Activated CD4-positive, alpha-beta memory T cell treated with anti-CD3 and anti-CD28 coated beads for 36 hours (primary cell): ENCODE measurements at regions of chr5 and their contacts with region 1.

Region 1: DNA sequence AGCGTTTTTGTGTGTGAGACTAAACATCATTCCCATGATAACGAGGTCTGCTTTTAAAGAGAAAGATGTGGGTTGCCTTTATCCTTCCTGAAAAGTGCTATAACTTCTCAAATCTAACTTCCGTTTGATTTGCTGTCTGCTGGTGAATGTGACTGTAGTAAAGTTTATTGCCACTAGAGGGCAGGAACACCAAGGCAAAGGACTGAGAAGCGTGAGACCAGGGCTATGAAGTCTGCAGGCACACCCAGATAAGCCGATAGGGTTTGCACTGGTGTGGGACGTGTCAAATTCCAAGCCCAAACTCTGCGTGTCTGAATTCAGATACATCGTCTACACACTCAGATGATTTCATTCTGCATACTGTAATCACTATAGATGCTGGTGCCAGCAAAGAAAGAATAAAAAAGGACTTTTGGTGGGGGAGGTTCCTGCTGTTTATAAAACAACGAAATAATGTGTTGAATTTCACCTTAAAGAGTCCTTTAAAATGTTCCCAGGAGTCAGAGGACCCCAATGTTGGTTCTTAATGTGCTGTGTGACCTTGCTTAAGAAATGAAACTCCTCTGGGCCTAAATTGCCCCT is 87.2 kb downstream of the PTTG1 start:
- DNase-seq: peak; percentile 76
- H3K4me3 Mint-ChIP-seq: peak overlapping the region; percentile 34
- H3K27ac Mint-ChIP-seq: peak overlapping the region; percentile 75
- H3K4me1 Mint-ChIP-seq: peaks cover 40% of the 10 kb centered on the region
- H3K27me3 Mint-ChIP-seq: no peaks in the 10 kb centered on the region

Region 2: DNA sequence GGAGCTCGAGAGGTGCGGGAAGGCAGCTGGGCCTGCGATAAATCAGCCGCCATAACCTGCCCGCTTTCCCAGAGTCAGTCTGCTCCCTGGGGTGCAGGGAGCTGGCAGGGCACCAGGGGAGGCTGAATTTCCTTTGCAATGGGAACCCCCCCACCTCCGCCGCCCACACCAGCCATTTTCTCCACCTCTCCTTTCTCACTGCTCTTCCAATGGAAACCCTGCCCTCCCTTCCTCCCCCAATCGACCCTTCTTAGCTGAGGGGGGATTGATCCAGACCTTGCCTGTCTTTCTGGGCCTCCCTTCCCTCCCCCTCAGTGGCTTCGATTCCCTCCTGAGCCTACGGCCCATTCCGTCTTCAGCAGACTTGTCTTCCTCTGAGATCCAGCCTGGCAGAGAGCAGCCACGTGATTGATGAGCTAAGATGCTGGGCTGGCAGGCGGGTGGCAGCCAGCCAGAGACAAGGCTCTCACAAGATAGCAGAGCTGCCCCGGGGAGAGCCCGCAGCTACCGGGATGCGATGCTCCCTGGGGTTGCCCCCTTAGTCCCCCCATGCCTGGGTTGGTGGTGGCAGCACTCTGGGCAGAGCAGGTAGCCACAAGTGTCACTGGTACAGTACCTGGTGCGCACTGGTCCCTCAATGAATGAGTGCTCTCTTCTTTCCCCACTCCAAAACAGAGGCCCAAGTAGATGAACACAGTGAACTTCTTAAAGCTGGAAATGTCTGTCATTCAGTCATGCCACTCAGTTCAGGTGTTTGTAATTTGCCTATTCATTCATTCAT is 333.2 kb before region 1 on chr5:
- CTCF ChIA-PET with region 1: no interaction called
- POLR2A ChIA-PET with region 1: no interaction called
- intact Hi-C with region 1: no loop called
- DNase-seq: no peak
- H3K4me3 Mint-ChIP-seq: no peak overlapping the region
- H3K27ac Mint-ChIP-seq: no peak overlapping the region
- H3K4me1 Mint-ChIP-seq: no peaks in the 10 kb centered on the region
- H3K27me3 Mint-ChIP-seq: no peaks in the 10 kb centered on the region

Region 3: DNA sequence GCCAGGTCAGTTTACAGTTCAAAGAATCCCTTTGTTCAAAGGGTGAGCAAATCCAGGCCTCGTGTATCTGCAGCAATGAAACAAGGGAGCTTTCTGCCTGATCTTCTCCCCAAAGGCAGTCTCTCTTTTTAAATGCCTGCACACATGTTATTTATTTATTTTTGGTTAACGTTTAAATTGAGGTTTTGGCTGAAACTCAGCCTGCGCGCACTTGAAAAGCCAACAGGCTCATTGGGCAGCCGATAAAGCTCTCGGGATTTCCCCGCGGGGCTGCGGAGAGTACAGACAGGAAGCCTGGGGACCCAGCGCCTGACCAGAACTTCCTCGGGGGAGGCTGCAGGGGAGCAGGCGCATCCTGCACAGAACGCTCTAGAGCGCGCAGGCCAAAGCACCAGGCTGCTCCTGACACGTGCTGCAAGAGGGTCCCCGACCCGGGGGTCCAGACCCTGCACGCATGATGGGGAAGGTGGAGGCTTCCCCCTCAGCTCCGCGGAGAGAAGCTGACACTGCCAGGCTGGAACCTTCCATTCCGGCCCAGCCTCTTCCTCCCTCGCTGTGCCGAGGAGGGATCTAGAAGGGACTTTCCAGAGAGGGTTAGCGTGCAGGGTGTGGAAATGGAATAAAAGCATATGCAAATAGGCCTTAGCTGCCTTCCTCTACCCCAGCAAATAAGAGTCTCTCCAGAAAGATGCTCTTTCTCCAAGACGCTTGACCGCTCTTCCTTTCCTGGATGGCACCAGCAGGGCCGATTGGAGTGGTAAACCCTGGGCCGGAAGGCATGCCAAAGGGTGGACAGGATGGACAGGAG is 41.1 kb before region 1 on chr5:
- CTCF ChIA-PET with region 1: interaction called, 34 read pairs
- POLR2A ChIA-PET with region 1: interaction called, 24 read pairs
- intact Hi-C with region 1: loop called (anchors 1 kb)
- DNase-seq: peak; percentile 91
- H3K4me3 Mint-ChIP-seq: peak overlapping the region; percentile 98
- H3K27ac Mint-ChIP-seq: peak overlapping the region; percentile 98
- H3K4me1 Mint-ChIP-seq: peaks cover 65% of the 10 kb centered on the region
- H3K27me3 Mint-ChIP-seq: no peaks in the 10 kb centered on the region

Region 4: DNA sequence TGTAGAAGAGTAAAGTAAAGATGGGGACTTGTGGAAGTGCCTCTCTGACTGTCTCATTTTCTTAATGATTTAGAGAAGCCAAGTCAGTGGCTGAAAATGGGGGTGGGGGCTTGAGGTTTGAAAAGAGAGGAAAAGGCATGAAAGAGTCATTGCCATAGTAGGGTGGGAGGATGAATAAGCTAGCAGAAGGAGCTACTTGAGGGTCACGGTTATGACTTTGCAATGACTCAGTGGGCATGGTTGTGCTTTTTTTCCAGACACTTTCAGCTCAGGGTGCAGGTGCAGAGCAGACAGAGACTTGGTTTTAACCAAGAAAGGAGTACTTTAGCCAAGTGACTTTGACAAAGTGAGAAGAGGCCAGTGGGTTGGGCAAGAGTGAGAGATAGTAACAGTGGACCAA is 30.6 kb after region 1 on chr5:
- CTCF ChIA-PET with region 1: interaction called, 14 read pairs
- POLR2A ChIA-PET with region 1: interaction called, 6 read pairs
- intact Hi-C with region 1: loop called (anchors 1 kb)
- DNase-seq: peak; percentile 84
- H3K4me3 Mint-ChIP-seq: no peak overlapping the region
- H3K27ac Mint-ChIP-seq: no peak overlapping the region
- H3K4me1 Mint-ChIP-seq: peaks cover 24% of the 10 kb centered on the region
- H3K27me3 Mint-ChIP-seq: no peaks in the 10 kb centered on the region

Region 5: DNA sequence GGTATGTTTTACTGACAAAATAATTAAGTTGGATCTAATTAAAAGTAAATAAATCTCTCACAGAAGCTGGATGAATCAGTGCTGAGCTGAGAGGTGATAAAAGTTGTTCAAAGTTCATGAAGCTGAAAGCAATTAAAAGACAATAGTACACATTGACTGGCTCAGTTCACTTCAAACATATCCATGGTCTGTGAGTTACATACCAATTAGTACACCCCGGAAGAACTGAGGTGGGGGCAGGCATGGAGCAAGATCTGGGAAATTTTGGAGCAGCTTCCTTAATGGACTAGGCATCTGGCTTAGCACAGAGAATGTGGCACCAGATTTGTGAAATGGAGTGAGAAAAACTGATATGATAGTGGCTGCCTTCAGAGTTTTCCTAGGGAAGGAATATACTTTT is 190.4 kb after region 1 on chr5:
- CTCF ChIA-PET with region 1: interaction called, 3 read pairs
- POLR2A ChIA-PET with region 1: no interaction called
- intact Hi-C with region 1: loop called (anchors 10 kb)
- DNase-seq: no peak
- H3K4me3 Mint-ChIP-seq: no peak overlapping the region
- H3K27ac Mint-ChIP-seq: no peak overlapping the region
- H3K4me1 Mint-ChIP-seq: no peaks in the 10 kb centered on the region
- H3K27me3 Mint-ChIP-seq: no peaks in the 10 kb centered on the region

Region 6: GRCh38 chr5:160846642-160847041 is 337.8 kb after region 1 on chr5:
- CTCF ChIA-PET with region 1: no interaction called
- POLR2A ChIA-PET with region 1: no interaction called
- intact Hi-C with region 1: loop called (anchors 5 kb)
- DNase-seq: no peak
- H3K4me3 Mint-ChIP-seq: no peak overlapping the region
- H3K27ac Mint-ChIP-seq: no peak overlapping the region
- H3K4me1 Mint-ChIP-seq: no peaks in the 10 kb centered on the region
- H3K27me3 Mint-ChIP-seq: peaks cover 4% of the 10 kb centered on the region